B cell (primary cell): ENCODE measurements at regions of chr1 and their contacts with region 1.

Region 1: DNA sequence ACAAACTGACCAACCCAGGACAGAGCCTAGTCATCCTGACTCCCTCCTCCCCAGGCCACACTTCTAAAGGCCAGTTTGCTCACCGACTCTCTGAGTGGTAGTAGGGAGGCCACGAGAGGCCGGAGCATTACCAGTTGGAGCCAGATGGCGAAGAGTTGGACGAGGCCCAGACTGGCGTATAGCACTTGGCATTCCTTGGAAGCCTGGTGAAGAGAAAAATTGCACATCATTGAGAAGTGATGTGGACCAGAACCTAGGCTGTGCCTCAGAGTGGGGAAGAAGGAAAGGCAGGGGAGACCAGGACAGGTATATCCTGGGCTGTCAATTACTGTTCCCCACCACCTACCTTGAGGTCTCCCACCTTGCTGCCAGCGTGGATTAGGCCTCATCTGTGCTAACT is 12.2 kb downstream of the PABPC4 start:
- DNase-seq: no peak
- ATAC-seq: no peak
- H3K4me3 ChIP-seq: no peak overlapping the region
- H3K4me3 Mint-ChIP-seq: no peak overlapping the region
- H3K27ac ChIP-seq: no peak overlapping the region
- H3K27ac Mint-ChIP-seq: no peak overlapping the region
- H3K4me1 ChIP-seq: no peaks in the 10 kb centered on the region
- H3K4me1 Mint-ChIP-seq: peaks cover 2% of the 10 kb centered on the region
- H3K27me3 ChIP-seq: no peaks in the 10 kb centered on the region
- H3K27me3 Mint-ChIP-seq: no peaks in the 10 kb centered on the region
- CTCF ChIP-seq: no peak

Region 2: GRCh38 chr1:39575191-39576015 is 11.1 kb after region 1 on chr1:
- CTCF ChIA-PET with region 1: interaction called, 4 read pairs
- POLR2A ChIA-PET with region 1: no interaction called
- intact Hi-C with region 1: loop called (anchors 1 kb)
- DNase-seq: peak; percentile 62
- ATAC-seq: peak; percentile 25
- H3K4me3 ChIP-seq: peak overlapping the region; percentile 55 to 93 (median 75)
- H3K4me3 Mint-ChIP-seq: peak overlapping the region; percentile 90
- H3K27ac ChIP-seq: peak overlapping the region; percentile 11 to 52
- H3K27ac Mint-ChIP-seq: peak overlapping the region; percentile 80
- H3K4me1 ChIP-seq: peaks cover 24 to 28% of the 10 kb centered on the region in 2 donors
- H3K4me1 Mint-ChIP-seq: peaks cover 28% of the 10 kb centered on the region
- H3K27me3 ChIP-seq: no peaks in the 10 kb centered on the region
- H3K27me3 Mint-ChIP-seq: no peaks in the 10 kb centered on the region
- CTCF ChIP-seq: no peak

Region 3: DNA sequence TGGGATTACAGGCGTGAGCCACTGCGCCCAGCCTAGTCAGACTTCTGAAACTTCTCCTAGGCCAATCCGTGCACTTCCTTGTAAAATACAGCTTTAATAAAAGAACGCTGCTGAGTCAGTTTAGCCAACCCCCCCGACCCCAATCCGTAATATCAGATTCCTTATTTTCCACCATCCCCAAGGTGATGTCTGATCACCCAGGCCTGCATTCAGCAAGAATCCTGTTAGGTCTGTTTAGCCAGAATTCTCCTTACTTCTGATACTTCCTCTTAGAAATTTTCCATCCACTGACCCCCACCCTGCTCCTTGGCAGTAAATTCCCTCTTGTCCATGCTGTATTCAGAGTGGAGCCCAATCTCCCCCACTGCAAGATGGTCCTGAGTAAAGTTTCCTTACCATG is 23.8 kb after region 1 on chr1:
- CTCF ChIA-PET with region 1: no interaction called
- POLR2A ChIA-PET with region 1: no interaction called
- intact Hi-C with region 1: no loop called
- DNase-seq: no peak
- ATAC-seq: no peak
- H3K4me3 ChIP-seq: no peak overlapping the region
- H3K4me3 Mint-ChIP-seq: no peak overlapping the region
- H3K27ac ChIP-seq: no peak overlapping the region
- H3K27ac Mint-ChIP-seq: no peak overlapping the region
- H3K4me1 ChIP-seq: no peaks in the 10 kb centered on the region
- H3K4me1 Mint-ChIP-seq: no peaks in the 10 kb centered on the region
- H3K27me3 ChIP-seq: no peaks in the 10 kb centered on the region
- H3K27me3 Mint-ChIP-seq: no peaks in the 10 kb centered on the region
- CTCF ChIP-seq: no peak